Endothelial cell of umbilical vein (primary cell): ENCODE measurements at regions of chr15 and their contacts with region 1.

Region 1: GRCh38 chr15:61834076-61834697 is 226.1 kb downstream of the VPS13C start:
- DNase-seq: peak; percentile 72
- H3K4me3 ChIP-seq: no peak overlapping the region
- H3K27ac ChIP-seq: no peak overlapping the region
- H3K4me1 ChIP-seq: no peaks in the 10 kb centered on the region
- H3K27me3 ChIP-seq: peaks cover 4 to 7% of the 10 kb centered on the region in 2 experiments
- CTCF ChIP-seq: peak; percentile 87 to 98
- POLR2A ChIP-seq: no peak

Region 2: DNA sequence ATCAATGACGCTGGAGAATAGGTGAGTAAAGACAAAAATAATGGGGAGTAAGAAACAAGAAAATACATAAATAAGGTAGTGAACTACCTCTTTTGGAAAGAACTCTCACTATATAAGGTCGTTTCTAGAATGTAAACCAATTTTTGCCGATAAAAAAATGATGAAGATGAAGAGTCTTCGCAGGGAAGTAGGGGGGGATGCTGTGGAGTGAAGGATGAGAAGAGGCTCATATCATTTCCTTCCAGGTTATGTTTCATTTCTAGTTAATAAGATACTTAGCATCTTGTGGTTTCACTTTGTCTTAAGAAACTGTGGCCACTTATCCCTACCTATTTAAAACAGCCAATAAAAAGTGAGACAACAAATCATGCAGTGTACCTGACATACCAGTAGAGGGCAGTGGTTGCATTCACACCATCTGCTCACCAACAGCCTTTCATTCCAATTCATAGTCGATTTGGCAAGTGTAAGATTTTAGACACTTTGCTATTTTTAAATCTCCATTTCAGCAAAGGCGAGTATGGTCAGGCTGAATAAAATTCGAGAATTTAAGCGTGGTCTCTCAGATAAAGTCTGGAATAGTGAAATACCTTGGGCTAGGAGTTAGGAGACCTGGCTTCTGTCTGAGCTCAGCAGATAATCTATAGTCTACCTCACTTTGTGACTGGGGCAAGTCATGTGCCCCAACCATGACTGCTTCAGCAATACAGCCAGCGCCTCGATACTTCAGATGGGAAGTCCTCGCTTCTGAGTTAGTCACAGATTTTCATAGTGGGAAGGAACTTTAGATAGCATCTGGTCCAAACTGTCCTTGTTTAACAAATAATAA is 1326.4 kb before region 1 on chr15:
- CTCF ChIA-PET with region 1: interaction called, 25 read pairs
- POLR2A ChIA-PET with region 1: no interaction called
- dilution Hi-C with region 1: no loop called
- intact Hi-C with region 1: loop called (anchors 1 kb)
- DNase-seq: peak; percentile 80
- H3K4me3 ChIP-seq: no peak overlapping the region
- H3K27ac ChIP-seq: no peak overlapping the region
- H3K4me1 ChIP-seq: no peaks in the 10 kb centered on the region
- H3K27me3 ChIP-seq: no peaks in the 10 kb centered on the region
- CTCF ChIP-seq: peak; percentile 78 to 87
- POLR2A ChIP-seq: no peak

Region 3: DNA sequence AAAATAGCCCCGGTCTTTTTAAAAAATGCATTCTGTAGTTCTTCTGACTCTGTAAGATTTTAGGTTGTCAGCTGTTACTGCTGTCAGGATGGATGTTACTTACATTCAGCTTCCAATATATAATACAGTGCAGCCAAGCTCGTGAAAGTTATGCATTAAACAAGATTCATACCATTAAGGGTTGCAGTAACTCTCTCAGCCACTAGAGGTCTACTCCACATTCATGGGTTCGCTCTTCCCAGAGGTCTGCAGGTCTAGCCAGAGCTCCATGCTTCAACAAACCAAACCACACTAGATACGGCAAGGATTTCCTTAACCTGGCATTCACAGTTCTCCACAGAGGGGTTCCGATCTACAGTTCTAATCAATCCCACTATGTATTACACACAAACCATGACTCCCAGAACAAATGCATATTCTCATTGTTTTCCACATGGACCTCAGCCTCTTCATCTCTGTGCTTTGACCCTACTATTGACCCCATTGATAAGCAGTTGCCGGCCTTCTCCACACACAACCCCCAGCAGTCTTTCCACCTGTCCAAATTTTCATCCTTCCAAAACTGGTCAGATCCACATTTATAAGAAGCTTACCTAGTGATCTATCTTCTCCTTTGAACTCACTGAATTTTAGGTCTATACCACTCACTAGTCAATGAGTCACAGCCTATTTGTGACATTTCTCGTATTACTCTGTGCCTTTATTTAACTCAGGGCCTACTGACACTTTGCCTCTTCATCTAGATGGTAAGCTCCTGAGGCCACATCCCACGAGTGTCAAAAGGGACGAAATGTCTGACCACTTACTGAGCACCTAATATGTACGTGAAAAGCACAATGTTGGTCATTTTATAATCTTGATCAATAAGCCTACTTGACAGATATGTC is 638.8 kb before region 1 on chr15:
- CTCF ChIA-PET with region 1: interaction called, 173 read pairs
- POLR2A ChIA-PET with region 1: no interaction called
- dilution Hi-C with region 1: no loop called
- intact Hi-C with region 1: loop called (anchors 1 kb)
- DNase-seq: peak; percentile 49
- H3K4me3 ChIP-seq: no peak overlapping the region
- H3K27ac ChIP-seq: no peak overlapping the region
- H3K4me1 ChIP-seq: no peaks in the 10 kb centered on the region
- H3K27me3 ChIP-seq: peaks cover 0 to 4% of the 10 kb centered on the region in 2 experiments
- CTCF ChIP-seq: peak; percentile 57 to 75
- POLR2A ChIP-seq: no peak

Region 4: GRCh38 chr15:61457050-61457733 is 377.0 kb before region 1 on chr15:
- CTCF ChIA-PET with region 1: interaction called, 10 read pairs
- POLR2A ChIA-PET with region 1: no interaction called
- dilution Hi-C with region 1: no loop called
- intact Hi-C with region 1: no loop called
- DNase-seq: no peak
- H3K4me3 ChIP-seq: no peak overlapping the region
- H3K27ac ChIP-seq: no peak overlapping the region
- H3K4me1 ChIP-seq: peaks cover 12% of the 10 kb centered on the region
- H3K27me3 ChIP-seq: no peaks in the 10 kb centered on the region
- CTCF ChIP-seq: no peak
- POLR2A ChIP-seq: no peak

Region 5: DNA sequence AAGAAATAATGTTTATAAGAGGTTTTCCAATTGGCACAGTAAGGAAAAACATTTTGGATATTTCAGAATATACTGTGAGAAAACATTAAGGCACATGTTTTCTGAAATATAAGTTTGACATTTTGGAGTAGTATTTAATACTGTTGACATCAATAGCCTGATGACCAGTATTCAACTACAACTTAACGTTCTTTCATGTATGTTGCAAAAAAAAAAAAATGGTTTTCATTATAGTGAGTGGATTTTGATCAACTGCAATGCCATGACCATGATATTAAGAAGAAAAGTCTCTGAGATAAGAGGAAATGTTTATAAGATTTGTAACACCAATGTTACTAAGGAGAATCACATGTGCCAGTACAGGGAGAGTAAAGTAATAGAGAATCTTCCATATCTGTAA is 352.3 kb before region 1 on chr15:
- CTCF ChIA-PET with region 1: no interaction called
- POLR2A ChIA-PET with region 1: no interaction called
- dilution Hi-C with region 1: no loop called
- intact Hi-C with region 1: no loop called
- DNase-seq: no peak
- H3K4me3 ChIP-seq: no peak overlapping the region
- H3K27ac ChIP-seq: no peak overlapping the region
- H3K4me1 ChIP-seq: no peaks in the 10 kb centered on the region
- H3K27me3 ChIP-seq: peaks cover 0 to 7% of the 10 kb centered on the region in 2 experiments
- CTCF ChIP-seq: no peak
- POLR2A ChIP-seq: no peak

Region 6: DNA sequence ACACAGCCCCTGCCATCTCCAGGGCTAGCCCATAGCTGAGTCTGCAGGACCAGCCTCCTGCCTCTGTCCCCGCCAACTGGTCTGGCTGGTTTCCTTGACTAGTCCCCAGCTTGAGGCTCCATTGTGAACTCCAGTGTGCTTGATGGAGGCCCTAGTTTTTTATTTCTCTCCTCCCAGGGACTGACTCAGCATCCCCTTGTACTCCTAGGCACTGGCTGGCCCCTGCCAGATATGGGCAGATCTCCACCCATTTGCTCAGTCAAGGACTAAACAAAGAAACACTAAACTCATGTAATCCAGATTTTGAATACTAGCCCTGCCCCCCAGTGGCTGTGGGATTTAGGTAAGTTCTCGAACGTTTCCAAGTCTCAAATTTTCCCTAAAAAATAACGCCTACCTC is 189.6 kb before region 1 on chr15:
- CTCF ChIA-PET with region 1: interaction called, 11 read pairs
- POLR2A ChIA-PET with region 1: no interaction called
- dilution Hi-C with region 1: no loop called
- intact Hi-C with region 1: no loop called
- DNase-seq: no peak
- H3K4me3 ChIP-seq: no peak overlapping the region
- H3K27ac ChIP-seq: no peak overlapping the region
- H3K4me1 ChIP-seq: no peaks in the 10 kb centered on the region
- H3K27me3 ChIP-seq: no peaks in the 10 kb centered on the region
- CTCF ChIP-seq: no peak
- POLR2A ChIP-seq: no peak

Region 7: GRCh38 chr15:62306851-62307504 is 472.8 kb after region 1 on chr15:
- CTCF ChIA-PET with region 1: interaction called, 25 read pairs
- POLR2A ChIA-PET with region 1: no interaction called
- dilution Hi-C with region 1: no loop called
- intact Hi-C with region 1: no loop called
- DNase-seq: peak; percentile 70
- H3K4me3 ChIP-seq: no peak overlapping the region
- H3K27ac ChIP-seq: no peak overlapping the region
- H3K4me1 ChIP-seq: peaks cover 3% of the 10 kb centered on the region
- H3K27me3 ChIP-seq: peaks cover 4 to 6% of the 10 kb centered on the region in 2 experiments
- CTCF ChIP-seq: peak; percentile 57 to 61
- POLR2A ChIP-seq: no peak